CD14-positive monocyte (primary cell): ENCODE measurements at regions of chr16 and their contacts with region 1.

Region 1: GRCh38 chr16:53207810-53208752 is 153.3 kb downstream of the CHD9 start:
- DNase-seq: peak; percentile 75 to 83 (median 78)
- H3K4me3 ChIP-seq: peak overlapping the region; percentile 53 to 97 (median 79)
- H3K4me3 Mint-ChIP-seq: peak overlapping the region; percentile 82 to 90
- H3K27ac ChIP-seq: peak overlapping the region; percentile 64 to 90
- H3K27ac Mint-ChIP-seq: peak overlapping the region; percentile 91 to 96 (median 95)
- H3K4me1 ChIP-seq: peaks cover 17 to 49% of the 10 kb centered on the region in 2 donors
- H3K4me1 Mint-ChIP-seq: peaks cover 23% of the 10 kb centered on the region
- H3K27me3 ChIP-seq: no peaks in the 10 kb centered on the region
- H3K27me3 Mint-ChIP-seq: peaks cover 0 to 2% (median 0%) of the 10 kb centered on the region in 3 donors
- CTCF ChIP-seq: peak; percentile 69

Region 2: DNA sequence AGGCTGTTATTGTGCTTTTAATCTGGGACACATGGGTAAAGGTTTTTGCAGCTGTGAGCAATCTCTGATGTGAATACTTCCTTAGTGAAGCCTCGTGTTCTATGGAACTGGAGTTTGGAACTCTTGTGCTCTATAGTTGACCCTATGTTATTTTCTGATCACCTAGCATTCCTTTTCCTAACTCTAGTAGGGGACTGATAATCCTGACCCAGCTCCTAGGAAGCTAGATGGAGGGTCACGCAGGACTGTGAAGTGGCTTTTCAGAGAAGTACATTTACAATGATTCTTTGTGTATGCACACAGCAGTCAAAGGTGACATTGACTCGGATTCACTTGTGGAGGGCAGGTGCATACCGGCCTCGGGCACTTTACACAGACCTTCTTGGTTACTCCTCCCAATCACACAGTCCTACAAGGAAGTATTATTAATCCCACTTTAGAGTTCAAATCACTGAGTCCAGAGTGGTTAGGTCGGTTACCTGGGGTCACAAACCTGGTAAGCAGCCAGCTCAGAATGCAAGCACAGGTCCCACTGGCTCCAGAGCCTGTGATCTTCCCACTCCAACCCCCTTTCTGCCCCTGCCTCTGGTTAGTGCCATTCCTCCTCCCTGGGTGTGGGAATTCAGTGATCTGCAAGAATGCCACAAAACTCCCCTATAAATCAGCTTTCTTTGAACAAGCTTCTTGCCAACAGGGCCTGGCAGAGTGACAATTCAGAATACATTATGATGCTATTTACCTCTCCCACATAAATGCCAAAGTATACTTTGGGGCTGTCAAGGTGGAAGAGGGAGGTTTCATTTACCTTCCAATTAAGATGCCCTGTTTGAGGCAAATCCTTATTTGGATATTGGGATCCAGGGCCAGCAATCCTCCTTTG is 162.5 kb before region 1 on chr16:
- intact Hi-C with region 1: loop called in 1 of 2 experiments (anchors 5 kb)
- DNase-seq: no peak
- H3K4me3 ChIP-seq: no peak overlapping the region
- H3K4me3 Mint-ChIP-seq: no peak overlapping the region
- H3K27ac ChIP-seq: no peak overlapping the region
- H3K27ac Mint-ChIP-seq: peak overlapping the region in 1 of 7 donors; percentile 47
- H3K4me1 ChIP-seq: peaks cover 6 to 11% of the 10 kb centered on the region in 2 donors
- H3K4me1 Mint-ChIP-seq: peaks cover 15% of the 10 kb centered on the region
- H3K27me3 ChIP-seq: no peaks in the 10 kb centered on the region
- H3K27me3 Mint-ChIP-seq: peaks cover 2 to 4% (median 3%) of the 10 kb centered on the region in 3 donors
- CTCF ChIP-seq: no peak

Region 3: DNA sequence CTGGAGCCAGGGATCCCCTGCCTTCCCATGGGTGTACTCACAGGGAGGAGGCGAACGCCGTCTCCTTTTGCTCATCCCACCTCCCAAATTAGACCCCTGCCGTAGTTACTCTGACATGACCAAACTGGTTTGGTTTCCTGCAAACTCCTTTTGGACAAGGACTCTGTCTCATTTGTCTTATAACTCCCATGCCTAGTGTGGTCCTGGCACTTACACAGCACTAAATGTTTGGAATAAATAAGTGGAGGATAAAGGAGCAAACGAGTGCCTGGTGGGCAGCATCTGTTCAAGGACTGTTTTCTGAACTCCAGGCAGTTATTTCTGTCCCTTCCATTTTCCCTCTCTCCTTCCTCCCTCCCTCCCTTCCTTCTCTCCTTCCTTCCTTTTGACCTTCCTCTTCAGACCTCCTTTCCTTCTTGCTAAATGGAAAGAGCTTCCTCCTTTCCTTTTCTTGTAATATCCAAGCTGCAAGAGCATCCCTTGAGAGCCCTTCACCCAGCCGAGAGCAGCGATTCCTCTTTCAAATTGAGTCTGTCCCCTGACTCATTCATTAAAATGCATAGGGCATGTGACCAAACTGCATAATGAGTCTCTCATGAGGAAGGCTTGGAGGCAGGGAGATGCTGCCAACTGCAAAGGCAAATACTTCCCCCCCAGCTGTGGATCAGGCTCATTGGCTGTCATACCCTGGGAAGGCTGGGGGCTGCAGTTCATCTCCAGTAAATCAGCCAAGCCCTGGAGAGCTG is 116.4 kb before region 1 on chr16:
- intact Hi-C with region 1: loop called in 1 of 2 experiments (anchors 5 kb)
- DNase-seq: peak; percentile 86 to 94 (median 91)
- H3K4me3 ChIP-seq: peak overlapping the region; percentile 8 to 69 (median 15)
- H3K4me3 Mint-ChIP-seq: peak overlapping the region; percentile 66 to 84
- H3K27ac ChIP-seq: peak overlapping the region; percentile 80 to 89
- H3K27ac Mint-ChIP-seq: peak overlapping the region; percentile 90 to 98 (median 95)
- H3K4me1 ChIP-seq: peaks cover 50 to 58% of the 10 kb centered on the region in 2 donors
- H3K4me1 Mint-ChIP-seq: peaks cover 59% of the 10 kb centered on the region
- H3K27me3 ChIP-seq: no peaks in the 10 kb centered on the region
- H3K27me3 Mint-ChIP-seq: peaks cover 0 to 8% (median 3%) of the 10 kb centered on the region in 3 donors
- CTCF ChIP-seq: no peak

Region 4: DNA sequence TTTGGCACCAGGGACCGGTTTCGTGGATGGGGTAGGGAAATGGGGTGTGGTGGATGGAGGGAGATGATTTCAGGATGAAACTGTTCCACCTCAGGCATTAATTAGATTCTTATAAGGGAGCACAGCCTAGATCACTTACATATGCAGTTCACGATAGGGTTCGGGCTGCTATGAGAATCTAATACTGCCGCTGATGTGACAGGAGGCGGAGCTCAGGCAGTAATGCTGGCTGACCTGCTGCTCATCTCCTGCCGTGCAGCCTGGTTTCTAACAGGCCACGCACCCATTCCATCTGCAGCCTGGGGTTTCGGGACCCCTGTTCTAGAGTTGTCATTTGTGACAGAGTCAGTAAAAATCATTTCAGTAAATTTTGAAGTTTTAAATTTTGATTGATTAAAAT is 53.6 kb before region 1 on chr16:
- intact Hi-C with region 1: no loop called
- DNase-seq: no peak
- H3K4me3 ChIP-seq: no peak overlapping the region
- H3K4me3 Mint-ChIP-seq: no peak overlapping the region
- H3K27ac ChIP-seq: no peak overlapping the region
- H3K27ac Mint-ChIP-seq: no peak overlapping the region
- H3K4me1 ChIP-seq: no peaks in the 10 kb centered on the region
- H3K4me1 Mint-ChIP-seq: no peaks in the 10 kb centered on the region
- H3K27me3 ChIP-seq: no peaks in the 10 kb centered on the region
- H3K27me3 Mint-ChIP-seq: no peaks in the 10 kb centered on the region
- CTCF ChIP-seq: no peak